Calu3 (cell line): ENCODE measurements at regions of chr1 and their contacts with region 1.

Region 1: GRCh38 chr1:35505908-35506798 is 51.0 kb downstream of the KIAA0319L start:
- DNase-seq: peak; percentile 69
- H3K4me3 Mint-ChIP-seq: no peak overlapping the region
- H3K27ac Mint-ChIP-seq: peak overlapping the region; percentile 35
- H3K4me1 Mint-ChIP-seq: peaks cover 23% of the 10 kb centered on the region
- H3K27me3 Mint-ChIP-seq: no peaks in the 10 kb centered on the region
- CTCF ChIP-seq: no peak

Region 2: GRCh38 chr1:35466120-35466519 is 40.0 kb before region 1 on chr1:
- CTCF ChIA-PET with region 1: interaction called, 3 read pairs
- intact Hi-C with region 1: loop called (anchors 5 kb)
- DNase-seq: no peak
- H3K4me3 Mint-ChIP-seq: no peak overlapping the region
- H3K27ac Mint-ChIP-seq: no peak overlapping the region
- H3K4me1 Mint-ChIP-seq: peaks cover 19% of the 10 kb centered on the region
- H3K27me3 Mint-ChIP-seq: no peaks in the 10 kb centered on the region
- CTCF ChIP-seq: no peak

Region 3: GRCh38 chr1:35544978-35545377 is 38.8 kb after region 1 on chr1:
- CTCF ChIA-PET with region 1: no interaction called
- intact Hi-C with region 1: loop called (anchors 5 kb)
- DNase-seq: peak; percentile 38
- H3K4me3 Mint-ChIP-seq: no peak overlapping the region
- H3K27ac Mint-ChIP-seq: no peak overlapping the region
- H3K4me1 Mint-ChIP-seq: no peaks in the 10 kb centered on the region
- H3K27me3 Mint-ChIP-seq: no peaks in the 10 kb centered on the region
- CTCF ChIP-seq: no peak